Naive thymus-derived CD4-positive, alpha-beta T cell (primary cell): ENCODE measurements at regions of chr7 and their contacts with region 1.

Region 1: GRCh38 chr7:142811154-142811737 is 40.5 kb downstream of the PRSS2 start:
- DNase-seq: peak in 7 of 9 donors; percentile 73 to 86 (median 79)
- ATAC-seq: peak; percentile 19
- H3K4me3 ChIP-seq: no peak overlapping the region
- H3K4me3 Mint-ChIP-seq: peak overlapping the region; percentile 58 to 100 (median 76)
- H3K27ac ChIP-seq: peak overlapping the region; percentile 98
- H3K27ac Mint-ChIP-seq: peak overlapping the region; percentile 92 to 100 (median 100)
- H3K4me1 ChIP-seq: peaks cover 47 to 89% of the 10 kb centered on the region in 2 donors
- H3K4me1 Mint-ChIP-seq: peaks cover 57 to 100% (median 91%) of the 10 kb centered on the region in 7 donors
- H3K27me3 ChIP-seq: no peaks in the 10 kb centered on the region
- H3K27me3 Mint-ChIP-seq: peaks cover 0 to 6% (median 0%) of the 10 kb centered on the region in 5 donors

Region 2: DNA sequence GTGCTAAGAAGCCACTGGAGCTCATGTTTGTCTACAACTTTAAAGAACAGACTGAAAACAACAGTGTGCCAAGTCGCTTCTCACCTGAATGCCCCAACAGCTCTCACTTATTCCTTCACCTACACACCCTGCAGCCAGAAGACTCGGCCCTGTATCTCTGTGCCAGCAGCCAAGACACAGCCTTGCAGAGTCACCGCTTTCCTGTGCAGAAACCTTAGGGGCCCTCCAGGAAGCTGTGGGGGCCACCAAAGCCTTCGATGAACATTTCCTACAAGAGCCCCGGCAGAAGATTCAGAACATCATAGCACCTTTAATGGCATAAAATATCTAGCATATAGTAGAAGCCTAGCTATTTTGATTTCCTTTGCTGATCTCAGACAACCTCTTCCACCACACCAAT is 465.4 kb before region 1 on chr7:
- CTCF ChIA-PET with region 1: interaction called, 6 read pairs
- POLR2A ChIA-PET with region 1: interaction called, 24 read pairs
- intact Hi-C with region 1: no loop called
- DNase-seq: peak in 5 of 9 donors; percentile 43 to 61 (median 50)
- ATAC-seq: peak; percentile 67
- H3K4me3 ChIP-seq: peak overlapping the region; percentile 21
- H3K4me3 Mint-ChIP-seq: peak overlapping the region in 7 of 10 donors; percentile 11 to 73 (median 69)
- H3K27ac ChIP-seq: peak overlapping the region; percentile 2
- H3K27ac Mint-ChIP-seq: peak overlapping the region in 7 of 9 donors; percentile 1 to 79 (median 40)
- H3K4me1 ChIP-seq: peaks cover 20 to 26% of the 10 kb centered on the region in 2 donors
- H3K4me1 Mint-ChIP-seq: peaks cover 3 to 42% (median 9%) of the 10 kb centered on the region in 7 donors
- H3K27me3 ChIP-seq: no peaks in the 10 kb centered on the region
- H3K27me3 Mint-ChIP-seq: peaks cover 0 to 26% (median 0%) of the 10 kb centered on the region in 5 donors

Region 3: DNA sequence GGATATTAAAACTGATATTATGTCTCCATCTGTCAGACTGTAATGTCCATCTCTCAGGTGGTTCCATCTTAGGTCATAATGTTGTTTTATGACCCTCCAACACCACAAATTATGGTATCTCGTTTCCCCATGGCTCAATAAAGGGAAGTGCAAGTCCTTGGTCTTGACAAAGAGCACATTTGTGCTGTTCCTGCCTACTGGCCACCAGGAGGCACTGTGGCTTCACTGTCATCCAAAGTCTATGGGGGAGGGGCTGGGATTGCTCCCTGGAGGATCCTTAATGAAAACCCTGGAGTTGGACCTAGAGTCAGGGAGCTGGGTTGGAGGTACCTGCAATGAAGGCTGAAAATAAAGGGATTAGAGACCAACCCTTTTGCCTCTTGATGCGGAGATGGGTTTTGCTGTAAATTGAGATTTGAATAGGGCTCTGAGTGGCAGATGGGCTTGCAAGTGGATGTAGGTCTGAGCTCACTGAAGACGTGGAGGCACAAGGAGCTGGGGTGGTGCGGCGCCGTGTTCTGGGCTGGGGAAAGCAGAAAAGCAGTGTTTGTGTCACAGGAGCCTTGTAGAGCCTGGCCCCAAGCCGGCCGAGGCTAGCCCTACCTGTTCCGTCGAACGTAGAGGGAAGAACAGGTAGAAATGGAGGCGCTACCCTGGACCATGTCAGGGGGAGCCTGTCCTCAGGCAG is 372.9 kb before region 1 on chr7:
- CTCF ChIA-PET with region 1: interaction called, 3 read pairs
- POLR2A ChIA-PET with region 1: interaction called, 18 read pairs
- intact Hi-C with region 1: loop called in 1 of 2 experiments (anchors 2 kb)
- DNase-seq: peak in 4 of 9 donors; percentile 25 to 37 (median 31)
- ATAC-seq: peak; percentile 71
- H3K4me3 ChIP-seq: no peak overlapping the region
- H3K4me3 Mint-ChIP-seq: peak overlapping the region in 2 of 10 donors; percentile 0 to 4
- H3K27ac ChIP-seq: no peak overlapping the region
- H3K27ac Mint-ChIP-seq: peak overlapping the region in 2 of 9 donors; percentile 8 to 11
- H3K4me1 ChIP-seq: peaks cover 6 to 26% of the 10 kb centered on the region in 2 donors
- H3K4me1 Mint-ChIP-seq: peaks cover 39 to 70% (median 66%) of the 10 kb centered on the region in 7 donors
- H3K27me3 ChIP-seq: no peaks in the 10 kb centered on the region
- H3K27me3 Mint-ChIP-seq: no peaks in the 10 kb centered on the region

Region 4: DNA sequence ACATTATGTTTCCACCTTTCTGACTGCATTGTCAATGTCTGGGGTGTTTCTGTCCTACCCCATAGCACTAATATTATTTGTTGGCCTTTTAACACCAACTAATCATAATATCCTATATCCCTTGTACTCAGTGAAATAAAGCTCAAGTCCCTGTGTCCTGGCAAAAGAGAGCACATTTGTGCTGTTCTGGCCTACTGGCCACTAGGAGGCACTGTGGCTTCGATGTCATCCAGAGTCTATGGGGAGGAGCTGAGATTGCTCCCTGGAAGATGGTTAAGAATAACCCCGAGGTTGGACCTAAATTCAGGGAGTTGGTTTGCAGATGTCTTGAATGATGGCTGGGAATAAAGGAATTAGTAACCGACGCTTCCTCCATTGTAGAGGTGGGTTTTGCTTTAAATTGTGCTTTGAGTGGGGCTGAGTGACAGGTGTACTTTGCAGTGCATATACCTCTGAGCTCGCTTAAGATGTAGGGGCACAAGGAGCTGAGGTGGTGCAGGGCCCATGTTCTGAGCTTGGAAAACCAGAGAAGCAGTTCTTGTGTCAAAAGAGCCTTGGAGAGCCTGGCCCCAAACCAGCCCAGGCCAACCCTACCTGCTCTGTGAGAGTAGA is 253.2 kb before region 1 on chr7:
- CTCF ChIA-PET with region 1: interaction called, 6 read pairs
- POLR2A ChIA-PET with region 1: interaction called, 33 read pairs
- intact Hi-C with region 1: loop called (anchors 1 kb)
- DNase-seq: peak; percentile 24 to 56 (median 42)
- ATAC-seq: peak; percentile 87
- H3K4me3 ChIP-seq: no peak overlapping the region
- H3K4me3 Mint-ChIP-seq: peak overlapping the region; percentile 18 to 73 (median 59)
- H3K27ac ChIP-seq: no peak overlapping the region
- H3K27ac Mint-ChIP-seq: peak overlapping the region in 4 of 9 donors; percentile 6 to 73 (median 48)
- H3K4me1 ChIP-seq: no peaks in the 10 kb centered on the region
- H3K4me1 Mint-ChIP-seq: peaks cover 0 to 26% (median 5%) of the 10 kb centered on the region in 7 donors
- H3K27me3 ChIP-seq: no peaks in the 10 kb centered on the region
- H3K27me3 Mint-ChIP-seq: peaks cover 0 to 24% (median 4%) of the 10 kb centered on the region in 5 donors

Region 5: DNA sequence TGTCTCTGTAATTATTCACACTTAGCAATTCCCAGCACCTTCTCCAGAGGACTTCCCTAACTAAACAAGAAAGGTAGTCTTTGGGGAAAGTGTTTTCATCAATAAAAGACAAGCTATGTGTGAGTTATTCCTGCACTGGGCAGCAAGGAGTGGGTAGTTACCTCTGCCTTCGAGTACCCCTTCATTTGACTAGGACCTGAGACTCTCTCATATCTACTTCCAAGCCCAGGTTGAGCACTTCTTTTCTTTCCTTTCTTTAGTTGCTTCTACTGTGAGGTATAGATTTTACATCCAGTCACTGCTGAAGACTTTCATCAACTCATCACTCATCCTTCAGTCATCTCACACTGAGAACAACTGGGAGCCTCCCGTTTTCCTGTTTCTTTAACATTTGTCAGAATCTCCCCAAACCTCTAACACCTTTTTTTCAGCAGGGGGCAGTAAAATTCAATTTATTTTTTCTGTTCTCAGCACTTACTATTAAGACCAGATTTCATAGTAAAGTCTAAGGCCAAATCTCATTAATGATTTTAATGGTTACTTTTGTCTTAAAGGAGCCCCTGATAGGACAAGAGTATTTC is 142.1 kb before region 1 on chr7:
- CTCF ChIA-PET with region 1: interaction called, 11 read pairs
- POLR2A ChIA-PET with region 1: interaction called, 16 read pairs
- intact Hi-C with region 1: loop called (anchors 1 kb)
- DNase-seq: peak in 5 of 9 donors; percentile 14 to 40 (median 29)
- ATAC-seq: no peak
- H3K4me3 ChIP-seq: no peak overlapping the region
- H3K4me3 Mint-ChIP-seq: peak overlapping the region in 6 of 10 donors; percentile 15 to 64 (median 32)
- H3K27ac ChIP-seq: no peak overlapping the region
- H3K27ac Mint-ChIP-seq: peak overlapping the region in 7 of 9 donors; percentile 3 to 73 (median 49)
- H3K4me1 ChIP-seq: peaks cover 0 to 14% of the 10 kb centered on the region in 2 donors
- H3K4me1 Mint-ChIP-seq: peaks cover 11 to 34% (median 34%) of the 10 kb centered on the region in 7 donors
- H3K27me3 ChIP-seq: no peaks in the 10 kb centered on the region
- H3K27me3 Mint-ChIP-seq: no peaks in the 10 kb centered on the region

Region 6: GRCh38 chr7:142853739-142854371 is 42.6 kb after region 1 on chr7:
- CTCF ChIA-PET with region 1: interaction called, 20 read pairs
- POLR2A ChIA-PET with region 1: interaction called, 133 read pairs
- intact Hi-C with region 1: loop called (anchors 1 to 2 kb)
- DNase-seq: peak; percentile 56 to 74 (median 68)
- ATAC-seq: peak; percentile 88
- H3K4me3 ChIP-seq: peak overlapping the region; percentile 85
- H3K4me3 Mint-ChIP-seq: peak overlapping the region; percentile 90 to 99 (median 97)
- H3K27ac ChIP-seq: peak overlapping the region; percentile 69
- H3K27ac Mint-ChIP-seq: peak overlapping the region; percentile 37 to 92 (median 89)
- H3K4me1 ChIP-seq: peaks cover 4 to 12% of the 10 kb centered on the region in 2 donors
- H3K4me1 Mint-ChIP-seq: peaks cover 17 to 61% (median 39%) of the 10 kb centered on the region in 7 donors
- H3K27me3 ChIP-seq: no peaks in the 10 kb centered on the region
- H3K27me3 Mint-ChIP-seq: peaks cover 0 to 30% (median 0%) of the 10 kb centered on the region in 5 donors

Region 7: GRCh38 chr7:142886477-142887265 is 75.4 kb after region 1 on chr7:
- CTCF ChIA-PET with region 1: no interaction called
- POLR2A ChIA-PET with region 1: no interaction called
- intact Hi-C with region 1: no loop called
- DNase-seq: no peak
- ATAC-seq: no peak
- H3K4me3 ChIP-seq: no peak overlapping the region
- H3K4me3 Mint-ChIP-seq: no peak overlapping the region
- H3K27ac ChIP-seq: no peak overlapping the region
- H3K27ac Mint-ChIP-seq: no peak overlapping the region
- H3K4me1 ChIP-seq: no peaks in the 10 kb centered on the region
- H3K4me1 Mint-ChIP-seq: peaks cover 0 to 2% (median 0%) of the 10 kb centered on the region in 7 donors
- H3K27me3 ChIP-seq: no peaks in the 10 kb centered on the region
- H3K27me3 Mint-ChIP-seq: peaks cover 0 to 14% (median 4%) of the 10 kb centered on the region in 5 donors